HCT116 (cell line): ENCODE measurements at regions of chr11 and their contacts with region 1.

Region 1: GRCh38 chr11:797296-798092 is 587 bp downstream of the SLC25A22 start:
- DNase-seq: no peak
- ATAC-seq: peak; percentile 49
- H3K4me3 ChIP-seq: peak overlapping the region; percentile 86 to 92
- H3K27ac ChIP-seq: peak overlapping the region; percentile 91
- H3K4me1 ChIP-seq: peaks cover 16 to 42% of the 10 kb centered on the region in 2 experiments
- H3K27me3 ChIP-seq: no peaks in the 10 kb centered on the region
- CTCF ChIP-seq: no peak
- POLR2A ChIP-seq: no peak
- RAD21 ChIP-seq: no peak

Region 2: GRCh38 chr11:783581-784015 is 13.9 kb before region 1 on chr11:
- CTCF ChIA-PET with region 1: interaction called, 6 read pairs
- POLR2A ChIA-PET with region 1: interaction called, 12 read pairs
- RAD21 ChIA-PET with region 1: no interaction called
- intact Hi-C with region 1: no loop called
- DNase-seq: peak; percentile 78
- ATAC-seq: peak; percentile 95
- H3K4me3 ChIP-seq: no peak overlapping the region
- H3K27ac ChIP-seq: peak overlapping the region; percentile 45
- H3K4me1 ChIP-seq: peaks cover 19 to 29% of the 10 kb centered on the region in 2 experiments
- H3K27me3 ChIP-seq: no peaks in the 10 kb centered on the region
- CTCF ChIP-seq: peak in 2 of 3 experiments; percentile 83 to 94
- POLR2A ChIP-seq: no peak
- RAD21 ChIP-seq: no peak; the same call in 1 of the 2 replicates

Region 3: GRCh38 chr11:809287-810039 is 12.0 kb after region 1 on chr11 and contains the start of gene RPLP2:
- CTCF ChIA-PET with region 1: interaction called, 3 read pairs
- POLR2A ChIA-PET with region 1: interaction called, 25 read pairs
- RAD21 ChIA-PET with region 1: no interaction called
- intact Hi-C with region 1: loop called (anchors 1 kb)
- DNase-seq: peak; percentile 93
- ATAC-seq: peak; percentile 69
- H3K4me3 ChIP-seq: peak within 1 kb of the TSS; percentile 82 to 97
- H3K27ac ChIP-seq: peak within 1 kb of the TSS; percentile 93
- H3K4me1 ChIP-seq: peaks cover 19 to 55% of the 10 kb centered on the region in 2 experiments
- H3K27me3 ChIP-seq: no peaks in the 10 kb centered on the region
- CTCF ChIP-seq: no peak
- POLR2A ChIP-seq: peak; percentile 48
- RAD21 ChIP-seq: no peak
- total RNA-seq, gene RPLP2: 3,615 TPM

Region 4: GRCh38 chr11:1222491-1223345 is 425.2 kb after region 1 on chr11 and contains the start of gene MUC5B:
- CTCF ChIA-PET with region 1: no interaction called
- POLR2A ChIA-PET with region 1: no interaction called
- RAD21 ChIA-PET with region 1: no interaction called
- intact Hi-C with region 1: no loop called
- DNase-seq: no peak
- ATAC-seq: no peak
- H3K4me3 ChIP-seq: no peak within 1 kb of the TSS
- H3K27ac ChIP-seq: no peak within 1 kb of the TSS
- H3K4me1 ChIP-seq: no peaks in the 10 kb centered on the region
- H3K27me3 ChIP-seq: no peaks in the 10 kb centered on the region
- CTCF ChIP-seq: no peak
- POLR2A ChIP-seq: no peak
- RAD21 ChIP-seq: no peak
- total RNA-seq, gene MUC5B: 1.5 TPM